ENCODE measurements at regions of chr2 and their contacts with region 1.

Region 1: GRCh38 chr2:47437287-47437686 is 34.3 kb downstream of the MSH2 start:
- ATAC-seq: peak in 2 of 8 experiments; percentile 47 to 56
- H3K4me3 ChIP-seq: no peak overlapping the region
- H3K27ac ChIP-seq: no peak overlapping the region
- H3K4me1 ChIP-seq: peaks cover 0 to 14% of the 10 kb centered on the region in 2 donors

Region 2: DNA sequence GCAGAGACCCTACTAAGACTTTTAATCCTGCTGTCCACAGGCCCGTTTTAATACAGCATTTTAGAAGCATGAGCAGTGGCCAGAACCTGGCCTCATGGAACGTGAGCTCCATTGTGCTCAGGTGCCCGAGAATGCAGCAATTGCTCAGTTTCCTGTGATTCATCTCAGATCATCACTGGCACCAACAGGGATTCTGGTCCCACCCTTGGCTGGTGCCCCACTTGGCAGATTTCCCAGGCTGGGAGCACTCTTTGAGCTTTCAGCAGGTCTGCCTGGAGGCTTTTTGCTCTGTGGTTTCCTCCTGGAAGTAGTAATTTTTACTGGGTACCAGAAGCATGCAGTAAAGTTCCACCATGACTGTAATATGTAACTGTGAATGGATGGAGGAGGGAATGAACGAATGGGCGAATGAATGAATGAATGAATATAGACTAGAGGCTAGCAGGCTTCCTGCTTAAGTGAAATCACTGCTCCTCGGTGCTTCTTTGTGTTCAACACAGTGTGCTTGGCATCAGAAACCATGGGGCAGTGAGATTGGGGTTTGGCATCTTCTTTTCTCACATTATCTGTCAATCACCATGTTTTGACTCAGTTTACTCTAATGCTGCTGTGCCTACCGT is 1473.0 kb before region 1 on chr2:
- in situ Hi-C with region 1: no loop called
- ATAC-seq: peak in 5 of 8 experiments; percentile 32 to 69 (median 54)
- H3K4me3 ChIP-seq: no peak overlapping the region
- H3K27ac ChIP-seq: no peak overlapping the region
- H3K4me1 ChIP-seq: peaks cover 0 to 2% of the 10 kb centered on the region in 2 donors

Region 3: GRCh38 chr2:47653902-47654789 is 216.9 kb after region 1 on chr2:
- in situ Hi-C with region 1: loop called in 1 of 9 experiments (anchors 25 kb)
- ATAC-seq: peak; percentile 18 to 91 (median 83)
- H3K4me3 ChIP-seq: no peak overlapping the region
- H3K27ac ChIP-seq: no peak overlapping the region
- H3K4me1 ChIP-seq: peaks cover 6 to 25% of the 10 kb centered on the region in 2 donors

Region 4: DNA sequence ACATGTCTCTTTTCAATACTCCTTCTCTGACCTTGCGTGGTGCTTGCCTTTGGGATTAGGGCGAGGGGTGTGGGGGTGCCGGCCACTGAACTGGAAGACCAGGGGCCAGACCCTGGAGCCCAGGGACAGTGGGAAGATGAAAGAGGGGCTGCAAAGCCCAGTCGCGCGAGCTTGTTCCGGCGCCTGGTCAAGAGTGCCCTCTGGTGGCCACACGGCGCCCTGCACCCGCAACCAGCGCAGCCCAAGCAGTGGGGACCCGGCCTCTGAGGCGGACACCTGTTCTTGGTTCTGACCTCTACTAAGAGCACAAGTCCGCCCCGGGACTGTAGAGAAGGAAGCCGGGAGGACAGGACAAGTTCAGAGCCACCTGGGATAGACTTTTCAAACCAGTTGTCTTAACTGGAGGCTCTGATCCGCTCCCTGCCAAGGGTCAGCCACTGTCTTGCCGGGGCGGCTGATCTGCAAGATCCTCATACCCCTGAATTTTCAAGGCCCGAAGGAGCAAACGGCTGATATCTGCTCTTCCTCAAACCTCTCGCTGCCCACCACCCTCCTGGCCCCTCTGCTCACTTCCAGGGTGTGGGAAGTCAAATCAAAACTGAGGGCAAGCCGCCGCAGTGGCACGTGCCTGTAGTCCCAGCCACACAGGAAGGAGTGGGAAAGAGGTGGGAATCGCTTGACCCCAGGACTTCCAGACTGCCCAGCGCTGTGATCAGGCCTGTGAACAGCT is 330.8 kb after region 1 on chr2:
- in situ Hi-C with region 1: loop called in 2 of 9 experiments (anchors 10 kb)
- ATAC-seq: peak; percentile 83 to 98 (median 94)
- H3K4me3 ChIP-seq: no peak overlapping the region
- H3K27ac ChIP-seq: no peak overlapping the region
- H3K4me1 ChIP-seq: peaks cover 0 to 9% of the 10 kb centered on the region in 2 donors